GM10248 (cell line): ENCODE measurements at regions of chr1 and their contacts with region 1.

Region 1: GRCh38 chr1:1059494-1060280 is 14.4 kb downstream of the RNF223 start:
- DNase-seq: peak; percentile 98
- CTCF ChIP-seq: no peak

Region 2: GRCh38 chr1:1001461-1002204 is 58.1 kb before region 1 on chr1:
- CTCF ChIA-PET with region 1: interaction called, 11 read pairs
- POLR2A ChIA-PET with region 1: no interaction called
- DNase-seq: peak; percentile 90
- CTCF ChIP-seq: peak; percentile 93

Region 3: GRCh38 chr1:1013105-1013921 is 46.4 kb before region 1 on chr1 and contains the start of gene ISG15:
- CTCF ChIA-PET with region 1: interaction called, 15 read pairs
- POLR2A ChIA-PET with region 1: interaction called, 3 read pairs
- DNase-seq: peak; percentile 83
- CTCF ChIP-seq: no peak

Region 4: DNA sequence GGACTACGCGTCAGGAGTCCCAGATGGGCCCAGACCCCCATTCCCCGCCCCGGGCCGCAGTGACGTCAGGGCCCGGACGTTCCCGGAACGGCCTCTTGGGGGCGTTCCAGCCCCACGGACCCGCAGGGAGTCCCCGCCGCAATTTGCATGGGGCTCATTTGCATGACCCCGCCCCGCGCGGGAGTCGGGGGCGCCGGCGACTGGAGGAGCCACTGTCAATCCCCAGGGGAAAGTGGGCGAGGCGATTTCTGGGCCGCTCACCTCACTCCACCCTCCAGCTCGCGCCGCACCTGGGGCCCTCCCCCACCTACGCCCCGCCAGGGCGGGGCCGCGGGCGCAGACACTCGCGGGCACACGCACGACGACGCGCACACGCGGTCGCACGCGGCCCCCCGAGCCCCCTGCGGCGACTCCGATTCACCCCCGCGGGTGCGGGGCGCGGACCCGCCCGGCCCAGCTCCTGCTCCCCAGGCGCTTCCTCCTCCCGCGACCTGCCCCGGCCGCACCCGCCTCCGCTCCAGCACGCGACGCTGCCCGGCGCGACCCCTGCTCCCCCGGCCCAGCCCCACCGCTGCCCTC is 26.6 kb before region 1 on chr1:
- CTCF ChIA-PET with region 1: interaction called, 43 read pairs
- POLR2A ChIA-PET with region 1: interaction called, 3 read pairs
- DNase-seq: peak; percentile 97
- CTCF ChIP-seq: peak; percentile 90

Region 5: DNA sequence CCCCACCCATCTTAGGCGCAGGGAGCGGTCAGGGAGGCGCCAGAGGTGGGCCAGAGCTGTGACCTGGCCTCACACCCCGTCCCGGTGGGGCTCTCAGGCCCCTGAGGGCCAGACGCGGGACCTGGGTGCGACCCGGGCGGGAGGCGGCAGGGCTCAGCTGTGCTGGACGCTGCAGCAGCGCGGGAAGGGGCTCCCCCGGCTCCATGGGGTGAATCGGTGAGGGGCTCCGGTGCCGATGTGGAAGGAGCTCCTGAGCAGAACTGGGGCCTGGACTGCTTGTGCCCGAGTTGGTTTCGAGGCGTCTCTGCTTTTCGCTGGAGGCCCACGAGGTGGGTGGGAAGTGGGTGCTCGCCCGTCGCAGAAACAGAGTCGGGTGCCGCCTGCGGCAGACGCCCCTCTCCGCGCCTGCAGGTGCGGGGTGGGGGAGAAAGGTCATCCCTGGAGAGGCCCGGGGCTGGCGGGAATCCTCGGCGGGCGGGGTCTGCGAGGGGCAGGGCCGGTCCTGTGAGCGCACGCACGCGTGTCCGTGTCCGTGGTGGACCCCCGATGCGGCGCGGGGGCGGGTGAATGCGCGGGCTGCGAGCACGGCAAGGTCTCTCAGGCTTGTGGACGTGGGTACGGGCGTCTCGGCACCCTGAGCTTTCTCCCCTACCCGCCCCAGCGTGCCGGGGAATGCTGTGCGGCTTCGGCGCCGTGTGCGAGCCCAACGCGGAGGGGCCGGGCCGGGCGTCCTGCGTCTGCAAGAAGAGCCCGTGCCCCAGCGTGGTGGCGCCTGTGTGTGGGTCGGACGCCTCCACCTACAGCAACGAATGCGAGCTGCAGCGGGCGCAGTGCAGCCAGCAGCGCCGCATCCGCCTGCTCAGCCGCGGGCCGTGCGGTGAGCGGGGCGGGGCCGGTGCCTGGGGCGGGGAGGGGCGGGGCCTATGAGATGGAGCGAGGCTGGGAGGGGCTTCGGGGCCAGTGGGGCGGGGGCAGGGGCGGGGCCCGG is 19.4 kb before region 1 on chr1:
- CTCF ChIA-PET with region 1: interaction called, 24 read pairs
- POLR2A ChIA-PET with region 1: no interaction called
- DNase-seq: peak; percentile 96
- CTCF ChIP-seq: no peak